ENCODE measurements at regions of chr12 and their contacts with region 1.

Region 1: GRCh38 chr12:87848248-87848868 is 180.8 kb downstream of the C12orf50 start:
- DNase-seq: peak; percentile 12
- ATAC-seq: peak; percentile 74
- H3K4me3 ChIP-seq: no peak overlapping the region
- H3K27ac ChIP-seq: no peak overlapping the region
- H3K4me1 ChIP-seq: no peaks in the 10 kb centered on the region
- H3K27me3 ChIP-seq: no peaks in the 10 kb centered on the region; a peak in 1 of 4 replicates
- CTCF ChIP-seq: peak; percentile 60 to 72 (median 67); a peak in 5 of 6 replicates
- EP300 ChIP-seq: no peak
- POLR2A ChIP-seq: no peak
- RAD21 ChIP-seq: peak; percentile 81

Region 2: DNA sequence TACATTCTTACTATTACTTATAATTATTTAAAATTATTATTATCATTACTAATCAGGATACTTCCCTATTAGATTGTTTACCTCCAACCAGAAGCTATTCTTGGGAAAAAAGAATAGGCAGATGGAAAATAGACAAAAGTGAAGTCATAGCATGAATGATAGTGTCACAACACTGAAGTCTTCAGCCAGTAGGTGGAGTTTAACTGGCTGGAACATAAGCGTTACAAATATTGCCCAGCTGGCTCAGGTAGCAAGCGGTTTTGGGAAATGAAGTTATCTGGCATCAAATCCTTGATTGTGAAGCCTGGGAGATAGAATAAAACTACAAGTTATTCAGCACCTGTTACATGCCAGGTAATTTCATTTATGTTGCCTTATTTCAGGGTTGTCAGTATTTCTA is 582.1 kb before region 1 on chr12:
- CTCF ChIA-PET with region 1: interaction called, 3 read pairs
- POLR2A ChIA-PET with region 1: no interaction called
- RAD21 ChIA-PET with region 1: no interaction called
- SMC1A ChIA-PET with region 1: interaction called, 3 read pairs
- in situ Hi-C with region 1: no loop called
- intact Hi-C with region 1: loop called (anchors 2 kb)
- DNase-seq: no peak
- ATAC-seq: peak; percentile 34; the same call in 1 of the 3 replicates
- H3K4me3 ChIP-seq: no peak overlapping the region
- H3K27ac ChIP-seq: no peak overlapping the region
- H3K4me1 ChIP-seq: no peaks in the 10 kb centered on the region
- H3K27me3 ChIP-seq: no peaks in the 10 kb centered on the region
- CTCF ChIP-seq: peak; percentile 5 to 25 (median 16); a peak in 2 of 6 replicates
- EP300 ChIP-seq: no peak
- POLR2A ChIP-seq: no peak
- RAD21 ChIP-seq: no peak

Region 3: GRCh38 chr12:87274594-87275245 is 573.6 kb before region 1 on chr12:
- CTCF ChIA-PET with region 1: interaction called, 4 read pairs
- POLR2A ChIA-PET with region 1: no interaction called
- RAD21 ChIA-PET with region 1: no interaction called
- SMC1A ChIA-PET with region 1: interaction called, 3 read pairs
- in situ Hi-C with region 1: no loop called
- intact Hi-C with region 1: loop called (anchors 2 kb)
- DNase-seq: no peak
- ATAC-seq: peak; percentile 84
- H3K4me3 ChIP-seq: no peak overlapping the region
- H3K27ac ChIP-seq: no peak overlapping the region
- H3K4me1 ChIP-seq: no peaks in the 10 kb centered on the region
- H3K27me3 ChIP-seq: no peaks in the 10 kb centered on the region
- CTCF ChIP-seq: peak in 2 of 3 experiments; percentile 51 to 52; a peak in 4 of 6 replicates
- EP300 ChIP-seq: no peak
- POLR2A ChIP-seq: no peak
- RAD21 ChIP-seq: peak; percentile 41

Region 4: GRCh38 chr12:87363497-87364084 is 484.8 kb before region 1 on chr12:
- CTCF ChIA-PET with region 1: no interaction called
- POLR2A ChIA-PET with region 1: no interaction called
- RAD21 ChIA-PET with region 1: no interaction called
- SMC1A ChIA-PET with region 1: no interaction called
- in situ Hi-C with region 1: no loop called
- intact Hi-C with region 1: loop called (anchors 5 kb)
- DNase-seq: no peak
- ATAC-seq: peak; percentile 75
- H3K4me3 ChIP-seq: no peak overlapping the region
- H3K27ac ChIP-seq: no peak overlapping the region
- H3K4me1 ChIP-seq: no peaks in the 10 kb centered on the region
- H3K27me3 ChIP-seq: no peaks in the 10 kb centered on the region
- CTCF ChIP-seq: no peak
- EP300 ChIP-seq: no peak
- POLR2A ChIP-seq: no peak
- RAD21 ChIP-seq: no peak

Region 5: GRCh38 chr12:88172844-88173407 is 324.6 kb after region 1 on chr12:
- CTCF ChIA-PET with region 1: no interaction called
- POLR2A ChIA-PET with region 1: no interaction called
- RAD21 ChIA-PET with region 1: no interaction called
- SMC1A ChIA-PET with region 1: no interaction called
- in situ Hi-C with region 1: no loop called
- intact Hi-C with region 1: no loop called
- DNase-seq: no peak
- ATAC-seq: no peak
- H3K4me3 ChIP-seq: no peak overlapping the region
- H3K27ac ChIP-seq: no peak overlapping the region
- H3K4me1 ChIP-seq: no peaks in the 10 kb centered on the region
- H3K27me3 ChIP-seq: no peaks in the 10 kb centered on the region
- CTCF ChIP-seq: no peak
- EP300 ChIP-seq: no peak
- POLR2A ChIP-seq: no peak
- RAD21 ChIP-seq: no peak

Measured in GM12878 (cell line).